ENCODE measurements at regions of chr6 and their contacts with region 1.

Region 1: DNA sequence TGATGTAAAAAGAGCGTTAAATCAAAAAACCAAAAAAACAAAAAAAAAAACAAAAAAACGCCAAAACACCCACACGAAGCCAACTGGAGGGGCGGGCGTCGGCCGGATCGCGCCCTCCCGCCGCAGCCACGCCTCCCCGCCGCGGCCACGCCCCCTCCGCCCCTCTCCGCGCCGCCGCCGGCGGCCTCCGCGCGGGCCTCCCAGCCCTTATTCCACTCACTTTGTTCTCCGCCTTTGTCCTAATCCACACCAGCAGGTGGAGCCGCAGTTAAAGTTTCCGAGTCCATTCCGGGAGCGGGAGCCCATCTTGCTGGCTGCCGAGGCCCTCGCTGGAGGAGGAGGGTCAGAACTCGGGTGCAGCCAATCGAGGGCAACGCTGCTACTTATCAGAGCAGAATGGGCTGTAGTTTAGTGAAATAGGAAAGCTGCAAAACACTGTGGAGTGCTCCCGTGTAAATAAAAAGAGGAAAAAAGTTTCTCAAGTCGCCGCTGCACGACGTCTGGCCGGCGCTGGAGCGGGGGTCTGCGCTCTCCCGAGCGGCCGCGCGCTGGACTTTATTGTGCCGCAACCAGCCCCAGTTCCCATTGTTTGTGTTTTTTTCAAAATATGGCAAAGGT is at the start of gene ASF1A:
- DNase-seq: peak; percentile 96
- ATAC-seq: peak; percentile 87
- H3K4me3 ChIP-seq: peak within 1 kb of the TSS; percentile 56 to 93
- H3K27ac ChIP-seq: peak within 1 kb of the TSS; percentile 85
- H3K4me1 ChIP-seq: peaks cover 12 to 21% of the 10 kb centered on the region in 2 experiments
- H3K27me3 ChIP-seq: no peaks in the 10 kb centered on the region
- CTCF ChIP-seq: peak; percentile 44 to 58 (median 57); a peak in 4 of 6 replicates
- POLR2A ChIP-seq: peak; percentile 92
- RAD21 ChIP-seq: peak; percentile 52
- total RNA-seq, gene ASF1A: 23.3 TPM

Region 2: DNA sequence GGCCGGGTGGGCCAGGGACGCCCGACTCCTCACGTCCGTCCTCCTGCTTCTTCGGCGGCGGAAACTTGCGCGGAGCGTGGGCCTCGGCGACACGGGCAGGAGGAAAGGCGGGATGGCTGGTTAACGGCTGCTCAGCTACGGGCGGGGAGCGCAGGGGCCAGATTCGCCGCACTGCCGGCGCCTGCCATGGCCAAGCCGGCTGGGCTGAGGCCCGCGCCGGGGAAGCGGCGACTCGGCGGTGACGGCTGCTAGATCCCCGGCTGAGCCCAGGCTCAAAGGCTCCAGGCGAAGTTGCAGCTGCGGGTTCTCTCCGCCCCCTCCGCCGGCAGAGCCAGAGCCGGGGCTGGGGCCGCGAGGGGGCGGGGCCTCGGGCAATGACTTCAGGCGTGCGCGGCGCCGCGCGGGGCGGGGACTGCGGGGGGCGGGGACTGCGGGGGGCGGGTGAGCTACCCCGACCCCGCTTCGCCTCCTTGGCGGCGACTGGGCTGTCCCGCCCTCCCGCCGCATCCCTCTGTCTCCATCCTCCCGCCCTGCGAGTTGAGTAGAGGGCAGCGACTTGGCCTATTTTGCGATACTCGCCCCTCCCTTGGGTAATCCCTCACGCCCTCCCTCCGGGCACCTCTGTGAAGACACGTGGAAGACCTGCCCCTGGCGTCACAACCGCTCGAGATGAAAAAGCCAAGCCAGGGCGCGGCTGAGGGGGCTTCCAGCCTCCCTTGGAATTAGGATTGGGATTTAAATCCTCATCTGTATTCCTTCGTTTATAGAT is 242.4 kb before region 1 on chr6 and contains the start of gene CEP85L:
- CTCF ChIA-PET with region 1: no interaction called
- POLR2A ChIA-PET with region 1: no interaction called
- RAD21 ChIA-PET with region 1: no interaction called
- intact Hi-C with region 1: loop called (anchors 10 kb)
- DNase-seq: peak; percentile 62
- ATAC-seq: peak; percentile 91
- H3K4me3 ChIP-seq: peak within 1 kb of the TSS; percentile 68 to 85
- H3K27ac ChIP-seq: peak within 1 kb of the TSS; percentile 70
- H3K4me1 ChIP-seq: peaks cover 13 to 22% of the 10 kb centered on the region in 2 experiments
- H3K27me3 ChIP-seq: no peaks in the 10 kb centered on the region
- CTCF ChIP-seq: no peak
- POLR2A ChIP-seq: no peak
- RAD21 ChIP-seq: no peak
- total RNA-seq, gene CEP85L: 4.9 TPM

Region 3: DNA sequence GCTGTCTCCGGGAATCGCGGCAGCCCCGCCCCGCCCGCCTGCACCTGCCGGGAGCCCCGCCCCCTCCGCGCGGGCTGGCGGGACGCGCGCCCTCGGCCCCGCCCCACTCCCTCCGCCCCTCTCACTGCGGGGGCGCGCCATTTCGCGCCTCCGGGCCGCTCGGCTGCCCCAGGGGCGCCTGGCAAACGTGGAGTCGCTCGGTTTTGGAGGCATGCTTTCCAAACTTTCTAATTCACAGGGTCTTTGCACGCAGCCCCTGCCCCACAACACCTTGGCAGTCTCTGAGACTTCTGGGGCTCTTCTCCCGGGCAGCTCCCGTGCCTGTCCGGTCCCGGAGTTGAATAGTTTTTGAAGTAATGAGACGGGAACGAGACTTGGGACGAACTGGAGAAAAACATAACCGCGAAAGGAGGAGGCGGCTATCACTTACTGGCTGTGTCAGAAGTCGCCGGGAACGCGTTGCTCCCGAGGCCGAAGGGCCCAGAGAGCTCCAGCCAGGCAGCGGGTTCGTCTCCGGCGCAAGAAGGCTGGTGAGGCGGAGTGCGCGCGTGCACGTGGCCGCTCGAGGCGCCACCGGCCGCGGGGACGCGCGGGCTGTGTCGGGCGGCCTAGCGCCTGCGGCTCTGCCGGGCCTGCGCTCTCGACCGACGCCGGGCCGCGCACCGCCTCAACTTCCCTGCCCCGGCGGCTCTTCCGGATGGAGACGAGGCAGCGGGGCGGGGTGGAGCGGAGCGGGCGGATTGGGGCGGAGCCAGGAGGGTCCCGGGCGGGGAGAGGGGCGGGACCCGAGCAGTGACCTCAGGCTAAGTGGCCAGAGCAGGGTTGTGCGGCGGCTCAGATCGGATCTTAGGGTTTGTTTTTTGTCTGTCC is 40.8 kb after region 1 on chr6 and contains the start of gene MCM9:
- CTCF ChIA-PET with region 1: interaction called, 3 read pairs
- POLR2A ChIA-PET with region 1: no interaction called
- RAD21 ChIA-PET with region 1: no interaction called
- intact Hi-C with region 1: loop called (anchors 2 kb)
- DNase-seq: peak; percentile 68
- ATAC-seq: peak; percentile 94
- H3K4me3 ChIP-seq: peak within 1 kb of the TSS; percentile 63 to 92
- H3K27ac ChIP-seq: peak within 1 kb of the TSS; percentile 84
- H3K4me1 ChIP-seq: peaks cover 4 to 12% of the 10 kb centered on the region in 2 experiments; a peak in 3 of 4 replicates
- H3K27me3 ChIP-seq: no peaks in the 10 kb centered on the region
- CTCF ChIP-seq: no peak
- POLR2A ChIP-seq: peak; percentile 38
- RAD21 ChIP-seq: no peak
- total RNA-seq, gene MCM9: 13.6 TPM

Measured in HCT116 (cell line).